ENCODE measurements at regions of chr13 and their contacts with region 1.

Region 1: DNA sequence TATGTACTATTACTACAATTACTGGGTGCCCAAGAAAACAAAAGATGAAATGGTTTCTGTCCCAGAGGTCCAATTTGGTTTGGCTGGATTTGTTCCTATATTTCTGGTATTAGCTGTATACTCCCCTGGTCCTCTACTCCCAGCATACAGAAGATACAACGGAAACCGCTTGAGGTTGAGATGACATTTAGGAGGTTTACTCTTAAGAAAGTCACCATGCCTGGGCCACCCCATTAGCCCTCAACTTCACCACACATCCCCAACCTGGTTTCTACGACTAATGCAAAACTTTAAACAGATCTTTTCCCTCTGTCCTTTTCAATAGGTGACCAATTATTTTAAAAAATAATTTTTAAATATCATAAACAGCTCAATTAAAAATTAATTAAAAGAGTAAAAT is 46.0 kb upstream of the EEF1AKMT1 start:
- DNase-seq: no peak
- ATAC-seq: no peak
- H3K4me3 ChIP-seq: no peak overlapping the region
- H3K4me3 Mint-ChIP-seq: no peak overlapping the region
- H3K27ac ChIP-seq: no peak overlapping the region
- H3K27ac Mint-ChIP-seq: no peak overlapping the region
- H3K4me1 ChIP-seq: no peaks in the 10 kb centered on the region
- H3K4me1 Mint-ChIP-seq: peaks cover 0 to 4% (median 0%) of the 10 kb centered on the region in 7 donors
- H3K27me3 ChIP-seq: no peaks in the 10 kb centered on the region
- H3K27me3 Mint-ChIP-seq: no peaks in the 10 kb centered on the region

Region 2: DNA sequence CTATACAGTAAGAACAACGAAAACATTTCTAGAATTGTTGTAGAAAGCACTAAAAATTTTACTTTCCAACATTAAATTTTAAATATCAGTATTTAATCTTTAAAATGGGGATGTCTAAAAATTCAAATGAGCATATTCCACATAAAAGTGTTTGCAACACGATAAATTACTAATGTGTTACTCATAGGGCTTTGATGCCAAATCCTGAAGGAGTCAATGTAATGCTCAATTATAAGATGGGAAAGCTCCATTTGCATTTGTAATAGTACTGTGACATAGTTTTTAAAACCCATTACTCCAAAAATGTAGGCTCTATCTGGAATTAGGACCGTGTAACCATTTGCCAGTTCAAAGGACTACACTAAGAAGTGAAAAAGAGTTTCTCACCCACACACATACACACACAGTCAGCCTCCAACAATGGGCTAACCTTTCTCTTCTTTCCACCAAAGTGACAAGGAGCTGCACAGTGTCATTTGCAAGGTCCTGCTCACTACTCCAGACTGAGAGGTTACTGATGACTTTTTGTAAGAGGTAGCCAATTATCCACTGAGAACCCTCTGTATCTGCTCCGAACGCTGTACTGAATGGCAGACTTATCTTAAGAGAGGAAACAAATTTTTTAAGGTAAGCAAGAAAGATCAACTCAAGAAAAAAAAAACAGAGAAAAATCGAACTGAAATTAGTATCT is 19.8 kb before region 1 on chr13:
- CTCF ChIA-PET with region 1: no interaction called
- POLR2A ChIA-PET with region 1: no interaction called
- intact Hi-C with region 1: loop called in 1 of 2 experiments (anchors 2 kb)
- DNase-seq: no peak
- ATAC-seq: no peak
- H3K4me3 ChIP-seq: no peak overlapping the region
- H3K4me3 Mint-ChIP-seq: no peak overlapping the region
- H3K27ac ChIP-seq: no peak overlapping the region
- H3K27ac Mint-ChIP-seq: peak overlapping the region in 1 of 9 donors; percentile 6
- H3K4me1 ChIP-seq: no peaks in the 10 kb centered on the region
- H3K4me1 Mint-ChIP-seq: peaks cover 9 to 19% (median 15%) of the 10 kb centered on the region in 7 donors
- H3K27me3 ChIP-seq: no peaks in the 10 kb centered on the region
- H3K27me3 Mint-ChIP-seq: no peaks in the 10 kb centered on the region

Region 3: DNA sequence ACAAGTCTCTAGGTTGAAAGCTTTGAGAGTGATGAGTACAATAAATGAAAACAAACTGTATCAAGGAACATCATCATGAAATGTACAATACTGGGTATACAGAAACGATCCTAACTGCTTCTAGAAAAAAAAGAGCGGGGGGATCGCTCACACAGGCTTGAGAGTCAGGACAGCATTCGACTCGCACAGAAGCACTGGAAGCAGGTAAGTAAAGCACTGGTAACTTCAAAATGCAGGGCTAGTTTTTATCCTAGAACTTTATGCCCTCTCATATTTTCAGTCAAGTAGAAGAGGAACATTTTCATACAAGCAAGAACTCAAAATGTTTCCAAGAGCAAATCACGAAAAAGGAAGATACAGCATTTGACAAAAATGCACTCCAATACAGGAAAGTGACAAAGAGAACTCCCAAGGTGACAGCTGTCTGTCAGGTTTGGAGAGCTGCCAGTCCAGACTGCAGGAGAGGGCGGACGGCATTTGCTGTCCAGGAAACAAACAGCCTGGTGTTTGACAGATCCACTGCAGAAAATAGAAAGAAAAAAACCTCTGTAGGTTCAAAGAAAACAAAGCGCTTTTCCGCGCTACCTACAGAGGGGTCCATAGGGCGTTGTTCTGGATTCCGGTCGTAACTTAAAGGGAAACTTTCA is 141.1 kb after region 1 on chr13:
- CTCF ChIA-PET with region 1: no interaction called
- POLR2A ChIA-PET with region 1: no interaction called
- intact Hi-C with region 1: no loop called
- DNase-seq: no peak
- ATAC-seq: no peak
- H3K4me3 ChIP-seq: no peak overlapping the region
- H3K4me3 Mint-ChIP-seq: peak overlapping the region in 2 of 10 donors; percentile 9 to 14
- H3K27ac ChIP-seq: no peak overlapping the region
- H3K27ac Mint-ChIP-seq: no peak overlapping the region
- H3K4me1 ChIP-seq: no peaks in the 10 kb centered on the region
- H3K4me1 Mint-ChIP-seq: peaks cover 0 to 6% (median 5%) of the 10 kb centered on the region in 7 donors
- H3K27me3 ChIP-seq: no peaks in the 10 kb centered on the region
- H3K27me3 Mint-ChIP-seq: peaks cover 5 to 34% (median 13%) of the 10 kb centered on the region in 5 donors

Region 4: GRCh38 chr13:21657538-21657937 is 837.8 kb after region 1 on chr13:
- CTCF ChIA-PET with region 1: no interaction called
- POLR2A ChIA-PET with region 1: no interaction called
- intact Hi-C with region 1: no loop called
- DNase-seq: no peak
- ATAC-seq: no peak
- H3K4me3 ChIP-seq: no peak overlapping the region
- H3K4me3 Mint-ChIP-seq: no peak overlapping the region
- H3K27ac ChIP-seq: no peak overlapping the region
- H3K27ac Mint-ChIP-seq: no peak overlapping the region
- H3K4me1 ChIP-seq: no peaks in the 10 kb centered on the region
- H3K4me1 Mint-ChIP-seq: no peaks in the 10 kb centered on the region
- H3K27me3 ChIP-seq: peaks cover 0 to 3% of the 10 kb centered on the region in 2 donors
- H3K27me3 Mint-ChIP-seq: peaks cover 22 to 46% (median 27%) of the 10 kb centered on the region in 5 donors

Measured in naive thymus-derived CD4-positive, alpha-beta T cell (primary cell).